Activated CD4-positive, alpha-beta memory T cell treated with anti-CD3 and anti-CD28 coated beads for 36 hours (primary cell): ENCODE measurements at regions of chr1 and their contacts with region 1.

Region 1: GRCh38 chr1:165717918-165718515 is 19.7 kb upstream of the ALDH9A1 start:
- DNase-seq: peak; percentile 39
- H3K4me3 Mint-ChIP-seq: no peak overlapping the region
- H3K27ac Mint-ChIP-seq: no peak overlapping the region
- H3K4me1 Mint-ChIP-seq: no peaks in the 10 kb centered on the region
- H3K27me3 Mint-ChIP-seq: no peaks in the 10 kb centered on the region

Region 2: GRCh38 chr1:165501970-165502348 is 216.1 kb before region 1 on chr1:
- CTCF ChIA-PET with region 1: no interaction called
- POLR2A ChIA-PET with region 1: no interaction called
- intact Hi-C with region 1: no loop called
- DNase-seq: no peak
- H3K4me3 Mint-ChIP-seq: no peak overlapping the region
- H3K27ac Mint-ChIP-seq: no peak overlapping the region
- H3K4me1 Mint-ChIP-seq: no peaks in the 10 kb centered on the region
- H3K27me3 Mint-ChIP-seq: peaks cover 13% of the 10 kb centered on the region

Region 3: DNA sequence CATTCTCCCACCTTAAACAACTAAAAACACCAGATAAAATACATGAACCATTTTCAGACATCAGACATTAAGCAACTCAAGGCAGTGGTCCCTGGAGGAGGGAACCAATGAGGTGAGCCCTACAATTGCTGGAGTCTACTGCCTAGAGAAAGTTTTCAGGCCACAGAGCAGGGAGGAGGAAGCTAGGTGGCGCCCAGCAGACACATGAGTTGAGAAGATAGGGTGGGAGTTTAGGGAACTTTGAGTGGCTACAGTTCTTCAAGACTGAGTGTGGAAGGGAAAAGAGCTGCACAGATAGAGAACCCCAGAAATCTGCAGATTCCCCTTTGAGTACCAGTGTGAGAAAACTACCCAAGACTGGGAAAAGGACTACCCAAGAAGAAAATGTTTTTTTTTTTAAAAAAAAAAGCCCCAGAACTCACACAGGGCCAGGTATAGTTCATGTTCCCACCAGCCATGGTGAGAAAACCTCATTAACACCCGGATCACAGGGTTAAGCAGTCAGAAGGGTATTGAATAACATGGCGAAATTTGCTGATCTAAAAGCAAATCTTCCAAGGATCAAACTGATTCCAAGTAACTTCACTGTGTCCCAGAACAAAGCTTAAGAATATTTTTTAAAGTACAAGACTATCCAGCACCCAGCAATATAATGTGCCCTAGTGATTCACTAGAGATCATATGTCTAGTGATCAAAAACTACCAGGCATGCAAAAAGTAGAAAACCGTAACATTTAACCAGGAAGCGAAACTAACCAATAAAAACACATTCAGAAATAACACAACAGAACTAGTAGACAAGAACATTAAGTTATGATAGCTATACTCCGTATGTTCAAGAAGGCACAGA is 31.7 kb before region 1 on chr1:
- CTCF ChIA-PET with region 1: no interaction called
- POLR2A ChIA-PET with region 1: no interaction called
- intact Hi-C with region 1: no loop called
- DNase-seq: no peak
- H3K4me3 Mint-ChIP-seq: no peak overlapping the region
- H3K27ac Mint-ChIP-seq: peak overlapping the region; percentile 71
- H3K4me1 Mint-ChIP-seq: peaks cover 41% of the 10 kb centered on the region
- H3K27me3 Mint-ChIP-seq: no peaks in the 10 kb centered on the region

Region 4: GRCh38 chr1:165914136-165914798 is 196.2 kb after region 1 on chr1:
- CTCF ChIA-PET with region 1: interaction called, 12 read pairs
- POLR2A ChIA-PET with region 1: no interaction called
- intact Hi-C with region 1: loop called (anchors 1 kb)
- DNase-seq: peak; percentile 71
- H3K4me3 Mint-ChIP-seq: no peak overlapping the region
- H3K27ac Mint-ChIP-seq: no peak overlapping the region
- H3K4me1 Mint-ChIP-seq: peaks cover 3% of the 10 kb centered on the region
- H3K27me3 Mint-ChIP-seq: no peaks in the 10 kb centered on the region